ENCODE measurements at regions of chr4 and their contacts with region 1.

Region 1: DNA sequence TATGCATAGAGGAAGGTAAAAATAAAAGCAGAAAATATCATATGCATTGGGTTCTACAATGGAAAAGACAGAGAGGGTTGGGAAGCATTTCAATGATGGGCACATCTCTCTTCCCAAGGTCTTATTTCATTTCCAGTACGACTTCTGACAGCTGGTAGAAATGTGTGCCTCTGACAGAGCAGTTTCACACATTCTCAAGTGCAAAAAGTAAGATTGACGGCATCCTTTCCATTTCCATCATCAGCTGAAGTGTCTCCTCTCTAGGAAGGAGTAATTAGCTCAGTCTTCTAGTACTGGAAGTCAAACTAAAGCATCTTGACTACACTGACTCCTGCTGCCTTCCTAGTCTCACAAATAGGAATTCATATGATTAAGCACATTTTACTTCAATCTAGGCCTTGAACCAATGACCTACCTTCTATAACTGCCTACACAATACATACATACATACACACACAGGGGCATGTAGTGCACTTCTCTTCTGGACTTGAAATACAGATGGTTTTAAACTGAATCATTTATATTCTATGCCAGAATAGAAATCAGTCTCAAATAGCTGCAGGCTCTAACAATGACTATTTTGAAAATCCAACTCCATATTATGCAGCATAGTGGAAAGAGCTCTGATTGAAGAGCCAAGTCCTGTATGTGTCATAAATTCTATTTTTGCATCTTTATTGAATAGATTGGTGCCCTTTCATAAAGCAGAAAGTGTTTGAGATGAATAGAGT is 473.4 kb downstream of the INPP4B start:
- DNase-seq: no peak
- H3K4me3 Mint-ChIP-seq: no peak overlapping the region
- H3K27ac Mint-ChIP-seq: peak overlapping the region; percentile 51
- H3K4me1 Mint-ChIP-seq: peaks cover 67% of the 10 kb centered on the region
- H3K27me3 Mint-ChIP-seq: no peaks in the 10 kb centered on the region

Region 2: DNA sequence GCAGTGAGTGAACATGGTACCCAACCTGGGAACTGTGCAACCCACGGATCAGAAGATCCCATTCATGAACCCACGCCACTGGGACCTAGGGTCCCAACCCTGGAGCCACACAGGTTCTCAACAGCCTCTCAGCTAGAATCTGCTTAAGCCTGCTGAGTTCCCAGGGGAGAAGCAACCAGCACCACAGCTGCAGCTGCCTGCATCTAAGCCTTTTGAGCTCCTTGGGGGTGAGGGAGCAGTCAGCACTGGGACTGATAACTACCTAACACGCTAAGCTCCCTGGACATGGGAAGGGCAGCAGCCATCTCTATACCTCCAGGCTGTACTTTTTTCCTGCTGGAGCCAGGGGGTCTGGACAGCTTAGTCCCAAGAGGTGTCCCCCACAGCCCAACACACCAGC is 557.0 kb before region 1 on chr4:
- CTCF ChIA-PET with region 1: no interaction called
- POLR2A ChIA-PET with region 1: no interaction called
- DNase-seq: no peak
- H3K4me3 Mint-ChIP-seq: no peak overlapping the region
- H3K27ac Mint-ChIP-seq: no peak overlapping the region
- H3K4me1 Mint-ChIP-seq: no peaks in the 10 kb centered on the region
- H3K27me3 Mint-ChIP-seq: peaks cover 12% of the 10 kb centered on the region

Region 3: GRCh38 chr4:142130666-142131065 is 242.0 kb before region 1 on chr4:
- CTCF ChIA-PET with region 1: no interaction called
- POLR2A ChIA-PET with region 1: no interaction called
- DNase-seq: no peak
- H3K4me3 Mint-ChIP-seq: no peak overlapping the region
- H3K27ac Mint-ChIP-seq: no peak overlapping the region
- H3K4me1 Mint-ChIP-seq: peaks cover 7% of the 10 kb centered on the region
- H3K27me3 Mint-ChIP-seq: no peaks in the 10 kb centered on the region

Region 4: GRCh38 chr4:142386449-142386848 is 13.8 kb after region 1 on chr4:
- CTCF ChIA-PET with region 1: interaction called, 7 read pairs
- POLR2A ChIA-PET with region 1: interaction called, 14 read pairs
- DNase-seq: no peak
- H3K4me3 Mint-ChIP-seq: peak overlapping the region; percentile 65
- H3K27ac Mint-ChIP-seq: peak overlapping the region; percentile 64
- H3K4me1 Mint-ChIP-seq: peaks cover 59% of the 10 kb centered on the region
- H3K27me3 Mint-ChIP-seq: no peaks in the 10 kb centered on the region